CD4-positive, alpha-beta T cell (primary cell): ENCODE measurements at regions of chr19 and their contacts with region 1.

Region 1: GRCh38 chr19:46717034-46717723 is at the start of gene PRKD2:
- DNase-seq: peak; percentile 73 to 94 (median 84)
- ATAC-seq: peak; percentile 45
- H3K4me3 ChIP-seq: peak within 1 kb of the TSS; percentile 96
- H3K4me3 Mint-ChIP-seq: peak within 1 kb of the TSS; percentile 99
- H3K27ac ChIP-seq: peak within 1 kb of the TSS; percentile 86 to 91
- H3K27ac Mint-ChIP-seq: peak within 1 kb of the TSS; percentile 99
- H3K4me1 ChIP-seq: peaks cover 56% of the 10 kb centered on the region
- H3K4me1 Mint-ChIP-seq: peaks cover 43% of the 10 kb centered on the region
- H3K27me3 ChIP-seq: no peaks in the 10 kb centered on the region
- H3K27me3 Mint-ChIP-seq: no peaks in the 10 kb centered on the region
- CTCF ChIP-seq: no peak
- total RNA-seq, gene PRKD2: 105 to 113 TPM

Region 2: DNA sequence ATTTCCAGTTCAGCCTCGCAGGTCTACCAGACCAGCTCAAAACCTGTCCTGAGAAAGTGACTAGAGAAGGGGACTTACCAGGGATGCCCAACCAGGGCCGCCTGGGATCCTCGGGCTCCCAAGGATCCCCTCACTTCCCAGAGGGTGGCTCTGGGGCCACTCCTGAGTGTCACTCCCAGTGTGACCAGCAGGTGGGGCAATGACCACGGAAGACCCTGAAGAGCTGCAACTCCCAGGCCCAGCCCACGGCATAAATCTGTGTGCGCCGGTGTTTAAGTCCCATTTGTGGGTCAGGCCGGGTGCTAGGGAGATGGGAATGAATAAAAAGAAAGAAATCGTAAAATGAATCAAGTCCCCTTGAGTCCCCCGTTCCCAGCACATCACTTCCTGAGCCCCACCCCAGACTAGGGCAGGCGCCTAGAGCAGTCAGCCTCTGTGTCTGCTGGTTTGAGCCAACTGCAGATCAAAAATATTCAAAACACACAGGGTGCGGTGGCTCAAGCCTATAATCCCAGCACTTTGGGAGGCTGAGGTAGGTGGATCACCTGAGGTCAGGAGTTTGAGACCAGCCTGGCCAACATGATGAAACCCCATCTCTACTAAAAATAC is 103.0 kb before region 1 on chr19:
- CTCF ChIA-PET with region 1: no interaction called
- POLR2A ChIA-PET with region 1: interaction called, 20 read pairs
- intact Hi-C with region 1: no loop called
- DNase-seq: peak; percentile 71 to 89 (median 77)
- ATAC-seq: peak; percentile 58
- H3K4me3 ChIP-seq: no peak overlapping the region
- H3K4me3 Mint-ChIP-seq: peak overlapping the region; percentile 56
- H3K27ac ChIP-seq: peak overlapping the region in 1 of 2 donors; percentile 41
- H3K27ac Mint-ChIP-seq: peak overlapping the region; percentile 93
- H3K4me1 ChIP-seq: peaks cover 90% of the 10 kb centered on the region
- H3K4me1 Mint-ChIP-seq: peaks cover 74% of the 10 kb centered on the region
- H3K27me3 ChIP-seq: no peaks in the 10 kb centered on the region
- H3K27me3 Mint-ChIP-seq: no peaks in the 10 kb centered on the region
- CTCF ChIP-seq: peak; percentile 90

Region 3: GRCh38 chr19:46704379-46705076 is 12.7 kb before region 1 on chr19:
- CTCF ChIA-PET with region 1: interaction called, 10 read pairs
- POLR2A ChIA-PET with region 1: interaction called, 21 read pairs
- intact Hi-C with region 1: no loop called
- DNase-seq: peak; percentile 72 to 95 (median 88)
- ATAC-seq: peak; percentile 99
- H3K4me3 ChIP-seq: no peak overlapping the region
- H3K4me3 Mint-ChIP-seq: no peak overlapping the region
- H3K27ac ChIP-seq: no peak overlapping the region
- H3K27ac Mint-ChIP-seq: peak overlapping the region; percentile 61
- H3K4me1 ChIP-seq: peaks cover 13% of the 10 kb centered on the region
- H3K4me1 Mint-ChIP-seq: peaks cover 15% of the 10 kb centered on the region
- H3K27me3 ChIP-seq: no peaks in the 10 kb centered on the region
- H3K27me3 Mint-ChIP-seq: no peaks in the 10 kb centered on the region
- CTCF ChIP-seq: peak; percentile 97

Region 4: DNA sequence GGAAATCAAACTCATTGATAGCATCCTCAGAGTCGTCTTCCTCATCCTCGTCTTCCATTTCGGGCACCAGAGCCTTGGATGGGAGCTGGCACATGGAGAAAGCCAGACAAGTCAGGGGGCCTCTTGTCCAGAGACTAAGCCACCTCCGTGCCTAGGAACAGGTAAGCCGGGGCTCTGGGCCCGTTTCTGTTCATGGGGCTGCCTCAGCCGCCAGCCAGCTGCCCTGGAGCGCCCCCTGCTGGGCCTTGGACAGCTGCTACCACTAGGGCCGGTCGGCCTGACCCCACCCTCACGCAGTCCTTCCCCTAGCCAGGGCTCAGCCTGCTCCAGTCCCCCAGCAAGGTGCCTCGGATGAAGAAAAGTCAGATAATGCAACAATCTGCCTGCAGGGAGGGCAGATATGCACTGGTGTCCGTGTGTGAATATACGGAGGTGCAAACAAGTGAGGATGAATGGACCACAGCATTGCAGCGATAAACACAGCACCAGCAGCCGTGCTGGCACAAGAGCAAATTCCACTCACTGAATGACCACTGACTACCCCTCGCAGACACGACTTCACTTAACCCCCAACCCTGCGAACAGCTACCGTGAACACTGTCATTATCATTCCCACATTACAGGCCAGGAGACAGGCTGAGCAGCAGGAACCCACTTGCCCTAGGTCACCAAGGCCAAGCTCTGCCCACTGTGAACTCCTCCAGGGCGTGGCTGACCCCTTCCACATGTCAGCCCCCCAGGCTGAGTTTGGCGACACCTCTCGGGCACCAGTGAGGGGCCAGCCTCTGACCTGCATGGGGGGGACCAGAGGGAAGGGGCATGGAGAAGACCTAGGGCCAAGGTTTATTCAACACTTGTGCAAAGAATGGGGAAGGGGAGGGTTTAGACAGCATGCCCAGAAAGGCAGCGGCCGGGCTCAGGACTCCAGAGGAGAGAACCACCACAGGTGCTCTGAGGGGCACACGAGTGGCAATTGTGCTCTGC is 11.8 kb after region 1 on chr19:
- CTCF ChIA-PET with region 1: interaction called, 17 read pairs
- POLR2A ChIA-PET with region 1: interaction called, 23 read pairs
- intact Hi-C with region 1: no loop called
- DNase-seq: peak; percentile 69 to 90 (median 82)
- ATAC-seq: peak; percentile 89
- H3K4me3 ChIP-seq: no peak overlapping the region
- H3K4me3 Mint-ChIP-seq: no peak overlapping the region
- H3K27ac ChIP-seq: no peak overlapping the region
- H3K27ac Mint-ChIP-seq: no peak overlapping the region
- H3K4me1 ChIP-seq: peaks cover 11% of the 10 kb centered on the region
- H3K4me1 Mint-ChIP-seq: peaks cover 8% of the 10 kb centered on the region
- H3K27me3 ChIP-seq: no peaks in the 10 kb centered on the region
- H3K27me3 Mint-ChIP-seq: no peaks in the 10 kb centered on the region
- CTCF ChIP-seq: peak; percentile 89

Region 5: DNA sequence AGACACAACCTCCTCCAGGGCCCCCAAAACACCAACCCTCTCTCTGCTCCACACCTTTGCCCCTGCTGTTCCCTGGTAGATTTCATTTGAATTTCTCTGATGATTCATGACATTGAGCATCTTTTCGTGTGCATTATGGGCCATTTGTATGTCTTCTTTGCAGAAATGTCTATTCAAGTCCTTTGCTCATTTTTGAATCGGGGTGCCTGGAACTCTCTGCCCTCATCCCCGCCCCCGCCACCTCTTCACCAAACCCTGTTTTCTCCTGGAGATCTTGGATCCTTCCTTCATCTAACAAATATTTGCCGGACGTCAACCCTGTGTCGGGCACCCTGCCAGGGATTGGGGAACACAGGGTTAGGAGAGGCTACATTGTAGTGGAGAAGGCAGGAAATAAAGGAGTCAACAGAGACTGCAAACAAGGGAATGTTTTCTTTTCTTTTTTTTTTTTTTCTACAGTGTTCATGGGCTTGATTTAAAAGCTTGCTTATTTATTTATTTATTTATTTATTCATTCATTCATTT is 96.7 kb after region 1 on chr19:
- CTCF ChIA-PET with region 1: no interaction called
- POLR2A ChIA-PET with region 1: no interaction called
- intact Hi-C with region 1: no loop called
- DNase-seq: no peak
- ATAC-seq: no peak
- H3K4me3 ChIP-seq: no peak overlapping the region
- H3K4me3 Mint-ChIP-seq: no peak overlapping the region
- H3K27ac ChIP-seq: no peak overlapping the region
- H3K27ac Mint-ChIP-seq: no peak overlapping the region
- H3K4me1 ChIP-seq: peaks cover 6% of the 10 kb centered on the region
- H3K4me1 Mint-ChIP-seq: no peaks in the 10 kb centered on the region
- H3K27me3 ChIP-seq: no peaks in the 10 kb centered on the region
- H3K27me3 Mint-ChIP-seq: no peaks in the 10 kb centered on the region
- CTCF ChIP-seq: no peak

Region 6: DNA sequence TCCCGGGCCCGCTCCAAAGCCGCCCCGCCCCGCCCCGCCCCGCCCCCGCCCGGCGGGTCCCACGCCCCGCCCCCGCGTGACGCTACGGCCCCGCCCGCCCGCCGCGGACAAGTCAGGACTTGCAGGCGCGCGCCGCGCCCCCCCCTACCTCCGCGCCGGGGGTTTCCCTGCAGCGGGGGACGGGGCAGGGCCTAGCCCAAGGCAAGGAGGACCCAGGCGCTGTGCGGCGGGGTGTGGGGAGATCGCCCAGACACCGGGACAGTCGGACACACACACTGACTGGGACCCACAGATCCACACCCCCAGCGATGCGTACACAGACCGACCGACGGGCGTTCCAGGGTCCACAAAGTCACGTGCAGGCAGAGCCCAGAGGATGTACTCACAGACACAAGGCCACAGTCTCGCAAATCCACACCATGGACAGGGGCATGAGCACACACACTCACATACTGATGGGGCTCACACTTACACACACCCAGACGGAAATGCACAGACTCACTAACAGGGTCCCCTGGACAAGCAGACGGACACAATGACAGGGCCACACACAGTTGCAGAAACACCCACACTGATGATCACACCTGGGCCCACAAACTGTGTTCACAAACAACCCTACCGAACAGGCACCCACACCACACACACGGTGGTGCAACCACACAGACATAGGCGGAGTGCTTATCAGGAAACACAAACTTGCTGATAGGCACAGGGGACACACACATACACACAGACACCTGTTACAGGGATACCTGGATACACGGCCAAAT is 514.2 kb after region 1 on chr19:
- CTCF ChIA-PET with region 1: no interaction called
- POLR2A ChIA-PET with region 1: no interaction called
- intact Hi-C with region 1: loop called in 1 of 2 experiments (anchors 10 kb)
- DNase-seq: peak; percentile 77 to 96 (median 90)
- ATAC-seq: peak; percentile 56
- H3K4me3 ChIP-seq: peak overlapping the region; percentile 62
- H3K4me3 Mint-ChIP-seq: peak overlapping the region; percentile 85
- H3K27ac ChIP-seq: peak overlapping the region in 1 of 2 donors; percentile 55
- H3K27ac Mint-ChIP-seq: peak overlapping the region; percentile 72
- H3K4me1 ChIP-seq: peaks cover 55% of the 10 kb centered on the region
- H3K4me1 Mint-ChIP-seq: peaks cover 28% of the 10 kb centered on the region
- H3K27me3 ChIP-seq: no peaks in the 10 kb centered on the region
- H3K27me3 Mint-ChIP-seq: no peaks in the 10 kb centered on the region
- CTCF ChIP-seq: no peak